Left colon (tissue), 2 donors: ENCODE measurements at regions of chr20 and their contacts with region 1.

Region 1: DNA sequence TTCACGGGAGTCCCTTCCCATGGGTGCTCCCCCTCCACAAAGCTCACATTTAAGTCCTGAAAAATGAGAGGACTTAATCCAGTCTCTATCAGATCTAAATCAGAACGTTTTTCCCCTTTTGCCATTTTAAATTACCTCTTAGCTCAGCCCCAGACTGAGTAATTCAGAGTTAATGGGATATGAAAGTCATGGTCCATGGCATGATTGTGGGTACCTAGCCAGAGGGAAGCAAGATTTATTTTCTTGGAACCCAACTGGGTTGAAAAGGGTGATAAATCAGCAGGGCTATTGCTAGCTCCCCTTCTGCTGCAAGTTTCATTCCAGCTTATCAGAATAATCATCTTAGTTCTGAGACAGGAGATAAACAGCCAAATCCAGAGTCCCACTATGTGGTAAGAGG is 320.2 kb upstream of the CHD6 start:
- DNase-seq: no peak
- ATAC-seq: no peak

Region 2: DNA sequence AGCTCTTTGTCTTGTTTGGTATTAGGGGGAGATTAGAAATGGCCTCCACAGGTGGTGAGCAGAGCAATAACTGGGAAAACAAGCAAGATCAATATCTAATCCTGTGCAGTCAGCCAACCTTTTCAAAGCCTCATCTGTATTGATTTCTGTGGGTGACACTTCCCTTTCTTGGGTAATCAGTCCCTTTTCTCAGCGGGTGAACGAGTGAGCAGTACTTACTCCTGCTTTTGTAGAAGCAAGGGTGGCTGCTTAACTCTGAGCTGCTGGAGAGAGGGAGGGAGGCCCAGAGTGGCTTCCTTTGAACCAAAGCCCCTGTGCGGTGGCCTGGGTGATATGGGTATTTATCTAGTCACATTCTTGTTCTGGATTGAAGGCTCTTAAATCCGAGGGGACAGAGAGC is 65.4 kb before region 1 on chr20:
- intact Hi-C with region 1: loop called in 1 of 2 experiments (anchors 10 kb)
- DNase-seq: no peak
- ATAC-seq: no peak